Psoas muscle (tissue), 8 donors: ENCODE measurements at regions of chr15 and their contacts with region 1.

Region 1: DNA sequence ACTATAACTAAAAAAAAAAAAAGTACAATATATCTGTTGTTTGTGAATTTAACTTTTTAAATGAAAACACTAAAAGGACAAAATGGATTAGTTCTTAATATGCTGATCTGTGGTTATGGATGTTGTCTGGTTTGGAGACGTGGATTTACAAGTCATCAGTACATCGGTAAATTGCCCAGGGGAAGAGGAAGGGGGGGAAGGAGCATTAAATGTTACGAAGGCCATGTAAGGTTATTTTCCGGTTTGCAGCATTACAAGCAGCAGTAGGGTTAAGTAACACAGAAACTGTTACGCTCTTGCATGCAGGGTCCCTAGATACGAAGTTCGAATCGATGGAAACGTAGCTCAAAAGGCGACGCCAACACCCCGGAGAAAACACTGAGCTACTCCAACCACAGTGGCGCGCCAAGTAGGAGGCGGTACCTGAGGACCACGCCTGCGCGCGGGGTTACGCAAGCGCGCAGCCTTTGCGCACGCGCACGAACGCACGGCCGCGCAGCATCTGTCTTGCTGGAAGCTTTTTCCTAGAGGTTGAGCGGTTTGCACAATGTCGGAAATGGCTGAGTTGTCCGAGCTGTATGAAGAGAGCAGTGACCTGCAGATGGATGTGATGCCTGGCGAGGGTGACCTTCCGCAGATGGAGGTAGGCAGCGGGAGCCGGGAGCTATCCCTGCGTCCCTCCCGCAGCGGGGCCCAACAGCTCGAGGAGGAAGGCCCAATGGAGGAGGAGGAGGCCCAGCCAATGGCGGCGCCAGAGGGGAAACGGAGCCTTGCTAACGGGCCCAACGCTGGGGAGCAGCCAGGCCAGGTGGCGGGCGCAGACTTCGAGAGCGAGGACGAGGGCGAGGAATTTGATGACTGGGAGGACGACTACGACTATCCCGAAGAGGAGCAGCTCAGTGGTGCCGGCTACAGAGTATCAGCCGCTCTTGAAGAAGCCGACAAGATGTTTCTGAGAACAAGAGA is at the start of gene EID1:
- DNase-seq: peak; percentile 92 to 95
- ATAC-seq: peak; percentile 99 to 100 (median 100)
- H3K4me3 ChIP-seq: peak within 1 kb of the TSS; percentile 91
- H3K27ac ChIP-seq: peak within 1 kb of the TSS; percentile 83
- H3K4me1 ChIP-seq: peaks cover 17% of the 10 kb centered on the region
- H3K27me3 ChIP-seq: no peaks in the 10 kb centered on the region
- CTCF ChIP-seq: no peak
- total RNA-seq, gene EID1: 73.9 to 120 (median 98.2) TPM

Region 2: GRCh38 chr15:48501208-48501607 is 376.7 kb before region 1 on chr15:
- intact Hi-C with region 1: no loop called
- DNase-seq: no peak
- ATAC-seq: no peak
- H3K4me3 ChIP-seq: no peak overlapping the region
- H3K27ac ChIP-seq: no peak overlapping the region
- H3K4me1 ChIP-seq: no peaks in the 10 kb centered on the region
- H3K27me3 ChIP-seq: no peaks in the 10 kb centered on the region
- CTCF ChIP-seq: no peak

Region 3: DNA sequence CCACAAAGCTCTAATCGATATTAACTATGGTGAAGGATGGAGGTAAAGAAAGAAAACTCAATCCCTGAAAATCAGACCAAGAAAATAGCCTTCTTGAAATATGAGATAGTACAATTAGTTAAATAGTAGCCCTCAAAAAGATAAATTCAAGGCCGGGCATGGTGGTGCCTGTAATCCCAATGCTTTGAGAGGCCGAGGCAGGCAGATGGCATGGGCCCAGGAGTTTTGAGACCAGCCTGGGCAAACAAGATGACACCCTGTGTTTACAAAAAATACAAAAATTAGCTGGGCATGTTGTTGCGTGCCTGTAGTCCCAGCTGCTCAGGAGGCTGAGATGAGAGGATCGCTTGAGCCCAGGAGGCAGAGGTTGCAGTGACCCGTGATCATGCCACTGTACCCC is 35.4 kb before region 1 on chr15:
- intact Hi-C with region 1: no loop called
- DNase-seq: no peak
- ATAC-seq: no peak
- H3K4me3 ChIP-seq: no peak overlapping the region
- H3K27ac ChIP-seq: no peak overlapping the region
- H3K4me1 ChIP-seq: no peaks in the 10 kb centered on the region
- H3K27me3 ChIP-seq: no peaks in the 10 kb centered on the region
- CTCF ChIP-seq: no peak

Region 4: GRCh38 chr15:48963524-48964113 is 85.7 kb after region 1 on chr15 and contains the start of gene SHC4:
- intact Hi-C with region 1: loop called (anchors 5 kb)
- DNase-seq: peak; percentile 63 to 78
- ATAC-seq: peak; percentile 73 to 93 (median 84)
- H3K4me3 ChIP-seq: peak within 1 kb of the TSS; percentile 75
- H3K27ac ChIP-seq: peak within 1 kb of the TSS; percentile 23
- H3K4me1 ChIP-seq: peaks cover 16% of the 10 kb centered on the region
- H3K27me3 ChIP-seq: no peaks in the 10 kb centered on the region
- CTCF ChIP-seq: no peak
- total RNA-seq, gene SHC4: 0.14 to 1.0 (median 0.49) TPM in 3 of 4 donors, not detected in the other

Region 5: DNA sequence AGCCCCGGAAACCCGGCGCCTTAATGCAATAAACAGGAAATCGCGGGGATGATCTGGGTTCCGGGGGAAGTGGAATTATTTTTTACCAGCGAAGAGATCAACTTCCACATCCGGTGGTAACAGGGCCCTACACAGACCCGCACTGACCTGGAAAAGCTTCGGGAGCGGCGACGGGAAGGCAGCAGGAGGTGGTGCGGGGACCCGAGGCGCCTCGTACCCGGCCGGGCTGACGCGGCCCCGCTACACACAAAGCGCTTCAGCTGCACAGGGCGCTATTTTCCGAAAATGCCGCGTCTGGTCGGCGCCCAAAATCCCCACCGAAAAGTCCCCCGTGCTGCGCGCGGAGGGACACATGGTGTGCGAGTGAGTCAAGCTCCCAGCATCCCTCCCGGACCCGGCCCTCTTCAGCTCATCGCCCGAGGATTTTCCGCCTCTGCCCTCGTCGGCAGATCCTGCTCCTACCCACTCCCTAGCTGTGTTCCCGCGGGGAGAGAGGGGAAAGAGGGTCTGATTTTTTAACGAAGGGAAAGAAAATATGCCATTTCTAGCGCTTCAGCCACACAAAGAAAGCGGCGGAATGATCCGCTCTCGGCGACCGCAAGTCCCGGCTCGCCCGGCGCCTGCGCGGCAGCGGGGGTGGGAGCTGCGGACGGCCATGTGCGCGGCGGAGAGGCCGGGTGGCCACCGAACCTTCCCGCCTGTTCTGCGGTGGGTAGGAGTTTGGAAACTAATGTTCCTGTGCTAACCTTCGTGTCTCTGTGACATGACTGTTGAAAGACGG is 1477.1 kb after region 1 on chr15 and contains the start of gene GABPB1:
- intact Hi-C with region 1: loop called in 1 of 2 experiments (anchors 10 kb)
- DNase-seq: peak; percentile 90 to 94
- ATAC-seq: peak; percentile 84 to 90 (median 88)
- H3K4me3 ChIP-seq: peak within 1 kb of the TSS; percentile 97
- H3K27ac ChIP-seq: peak within 1 kb of the TSS; percentile 100
- H3K4me1 ChIP-seq: peaks cover 39% of the 10 kb centered on the region
- H3K27me3 ChIP-seq: no peaks in the 10 kb centered on the region
- CTCF ChIP-seq: no peak
- total RNA-seq, gene GABPB1: 5.1 to 16.7 (median 9.3) TPM